Activated B cell treated with CpG ODN at 0.5 μM for 24 hours (primary cell): ENCODE measurements at regions of chr1 and their contacts with region 1.

Region 1: GRCh38 chr1:27603681-27604578 is at the start of gene AHDC1:
- DNase-seq: peak; percentile 89
- ATAC-seq: peak; percentile 78
- H3K4me3 Mint-ChIP-seq: peak within 1 kb of the TSS; percentile 95
- H3K27ac Mint-ChIP-seq: peak within 1 kb of the TSS; percentile 83
- H3K4me1 Mint-ChIP-seq: peaks cover 49% of the 10 kb centered on the region
- H3K27me3 Mint-ChIP-seq: no peaks in the 10 kb centered on the region
- CTCF ChIP-seq: no peak
- total RNA-seq, gene AHDC1: 22.4 and 23.3 TPM in 2 replicates

Region 2: DNA sequence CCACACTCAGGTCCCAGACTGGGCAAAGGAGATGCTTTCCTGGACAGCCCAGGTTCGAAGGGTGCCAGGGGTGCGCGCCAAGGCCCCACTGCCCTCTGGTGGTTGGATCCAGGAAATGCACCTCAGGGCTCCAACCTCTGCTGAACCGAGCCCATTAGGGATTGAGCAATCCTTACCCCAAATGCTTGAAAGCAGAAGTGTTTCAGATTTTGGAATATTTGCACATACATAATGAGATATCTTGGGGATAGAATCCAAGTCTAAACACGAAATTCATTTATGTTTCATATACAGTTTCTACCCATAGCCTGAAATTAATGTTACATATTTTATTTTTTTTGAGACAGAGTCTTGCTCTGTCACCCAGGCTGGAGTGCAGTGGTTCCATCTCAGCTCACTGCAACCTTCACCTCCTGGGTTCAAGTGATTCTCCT is 506.4 kb before region 1 on chr1:
- CTCF ChIA-PET with region 1: no interaction called
- POLR2A ChIA-PET with region 1: interaction called, 15 read pairs
- intact Hi-C with region 1: loop called (anchors 5 kb)
- DNase-seq: peak; percentile 61
- ATAC-seq: peak; percentile 40
- H3K4me3 Mint-ChIP-seq: no peak overlapping the region
- H3K27ac Mint-ChIP-seq: no peak overlapping the region
- H3K4me1 Mint-ChIP-seq: peaks cover 22% of the 10 kb centered on the region
- H3K27me3 Mint-ChIP-seq: no peaks in the 10 kb centered on the region
- CTCF ChIP-seq: peak; percentile 72

Region 3: DNA sequence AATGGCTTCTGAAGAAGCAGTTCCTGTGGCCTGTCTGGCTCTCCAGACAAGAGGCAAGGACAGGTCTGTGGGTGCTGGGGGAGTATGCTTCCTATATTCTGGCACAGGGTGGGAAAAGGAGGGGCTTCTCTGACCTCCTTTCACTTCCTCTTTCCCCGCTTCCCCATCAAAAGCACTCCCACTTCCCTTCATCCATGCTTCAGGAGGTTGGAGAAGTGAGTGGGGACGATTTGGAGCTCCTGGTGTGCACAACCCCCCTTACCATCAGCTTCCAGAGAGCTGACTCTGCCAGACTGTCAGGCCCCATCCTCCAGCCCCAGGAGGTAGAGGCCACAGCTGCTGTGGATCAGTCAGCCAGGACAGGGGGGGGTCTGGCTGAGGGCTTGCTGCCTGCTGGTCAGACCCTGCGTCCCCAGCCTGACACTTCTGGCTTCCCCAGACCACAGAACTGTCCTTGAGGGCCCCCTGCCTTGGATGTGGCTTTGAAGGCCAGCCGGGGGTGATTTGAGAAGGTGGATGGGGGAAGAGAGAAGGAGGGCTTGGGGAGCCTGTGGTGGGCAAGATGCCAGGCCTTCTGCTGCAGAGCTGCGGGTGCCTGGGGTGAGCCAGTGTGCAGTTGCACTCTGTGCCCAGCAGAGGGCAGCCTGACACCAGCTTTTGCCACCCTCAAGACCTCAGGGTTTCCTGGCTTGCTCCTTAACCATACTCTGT is 303.4 kb before region 1 on chr1:
- CTCF ChIA-PET with region 1: interaction called, 85 read pairs
- POLR2A ChIA-PET with region 1: interaction called, 4 read pairs
- intact Hi-C with region 1: loop called (anchors 1 kb)
- DNase-seq: peak; percentile 72
- ATAC-seq: peak; percentile 90
- H3K4me3 Mint-ChIP-seq: no peak overlapping the region
- H3K27ac Mint-ChIP-seq: no peak overlapping the region
- H3K4me1 Mint-ChIP-seq: peaks cover 3% of the 10 kb centered on the region
- H3K27me3 Mint-ChIP-seq: no peaks in the 10 kb centered on the region
- CTCF ChIP-seq: peak; percentile 99

Region 4: DNA sequence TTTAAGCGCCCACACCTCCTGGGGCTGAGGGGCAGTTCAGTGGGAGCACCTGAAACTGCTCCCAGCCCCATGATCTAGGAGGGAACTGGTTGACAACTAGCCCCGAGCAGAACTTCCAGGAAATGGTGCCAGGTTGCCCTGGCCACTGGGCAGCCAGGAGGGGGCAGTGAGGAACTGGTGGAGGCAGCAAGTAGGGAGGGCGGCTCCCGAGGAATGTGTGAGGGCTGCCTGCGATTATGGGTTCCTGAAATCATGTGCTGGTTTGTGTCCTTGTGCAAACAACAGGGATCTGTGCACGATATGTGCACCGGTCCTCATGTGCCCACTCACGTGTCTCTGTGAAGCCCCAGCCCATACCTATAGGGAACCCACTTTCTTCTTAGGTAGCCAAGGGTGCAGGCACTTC is 201.6 kb before region 1 on chr1:
- CTCF ChIA-PET with region 1: interaction called, 47 read pairs
- POLR2A ChIA-PET with region 1: interaction called, 22 read pairs
- intact Hi-C with region 1: loop called (anchors 1 kb)
- DNase-seq: no peak
- ATAC-seq: no peak
- H3K4me3 Mint-ChIP-seq: peak overlapping the region; percentile 72
- H3K27ac Mint-ChIP-seq: peak overlapping the region; percentile 91
- H3K4me1 Mint-ChIP-seq: peaks cover 53% of the 10 kb centered on the region
- H3K27me3 Mint-ChIP-seq: no peaks in the 10 kb centered on the region
- CTCF ChIP-seq: no peak

Region 5: DNA sequence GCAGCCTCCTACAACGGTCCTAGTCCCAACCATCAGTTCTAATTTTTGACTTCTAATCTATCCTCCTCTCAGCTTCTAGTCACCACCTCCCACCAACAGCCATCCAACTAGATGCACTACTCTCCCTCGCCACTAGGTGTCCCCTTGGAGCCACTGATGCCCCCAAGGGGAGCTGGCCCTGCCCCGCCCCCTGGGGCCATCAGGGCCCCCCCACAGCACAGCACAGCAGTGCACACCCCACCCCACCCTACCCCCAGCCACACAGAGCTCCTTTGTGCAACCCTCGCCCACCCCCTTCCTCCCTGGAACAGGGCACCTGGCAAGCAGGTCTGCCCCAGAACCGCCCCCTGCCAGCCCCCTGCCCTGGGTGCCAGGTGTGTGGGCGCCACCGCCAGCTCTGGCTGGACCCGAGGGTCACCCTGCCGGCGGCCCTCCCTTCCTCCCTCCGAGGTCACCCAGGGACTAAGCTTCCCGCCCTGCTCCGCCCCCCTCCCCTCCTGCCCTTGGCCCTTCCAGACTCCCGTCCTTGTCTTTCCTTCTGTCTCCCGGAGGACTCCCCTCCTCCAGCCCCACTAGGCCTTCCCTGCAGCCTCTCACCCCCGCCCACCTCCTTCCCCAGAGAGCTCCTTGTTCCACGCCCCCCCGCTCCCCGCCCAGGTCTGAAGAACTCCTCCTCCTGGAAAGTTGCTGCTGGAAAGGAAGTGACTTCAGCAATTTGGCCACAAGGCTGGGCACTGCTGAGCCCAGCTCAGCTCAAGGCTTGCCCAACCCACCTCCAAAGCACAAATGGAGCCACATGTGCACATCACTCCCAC is 46.9 kb before region 1 on chr1:
- CTCF ChIA-PET with region 1: interaction called, 60 read pairs
- POLR2A ChIA-PET with region 1: interaction called, 14 read pairs
- intact Hi-C with region 1: loop called (anchors 1 kb)
- DNase-seq: peak; percentile 62
- ATAC-seq: peak; percentile 84
- H3K4me3 Mint-ChIP-seq: peak overlapping the region; percentile 36
- H3K27ac Mint-ChIP-seq: peak overlapping the region; percentile 26
- H3K4me1 Mint-ChIP-seq: peaks cover 38% of the 10 kb centered on the region
- H3K27me3 Mint-ChIP-seq: no peaks in the 10 kb centered on the region
- CTCF ChIP-seq: peak; percentile 26

Region 6: DNA sequence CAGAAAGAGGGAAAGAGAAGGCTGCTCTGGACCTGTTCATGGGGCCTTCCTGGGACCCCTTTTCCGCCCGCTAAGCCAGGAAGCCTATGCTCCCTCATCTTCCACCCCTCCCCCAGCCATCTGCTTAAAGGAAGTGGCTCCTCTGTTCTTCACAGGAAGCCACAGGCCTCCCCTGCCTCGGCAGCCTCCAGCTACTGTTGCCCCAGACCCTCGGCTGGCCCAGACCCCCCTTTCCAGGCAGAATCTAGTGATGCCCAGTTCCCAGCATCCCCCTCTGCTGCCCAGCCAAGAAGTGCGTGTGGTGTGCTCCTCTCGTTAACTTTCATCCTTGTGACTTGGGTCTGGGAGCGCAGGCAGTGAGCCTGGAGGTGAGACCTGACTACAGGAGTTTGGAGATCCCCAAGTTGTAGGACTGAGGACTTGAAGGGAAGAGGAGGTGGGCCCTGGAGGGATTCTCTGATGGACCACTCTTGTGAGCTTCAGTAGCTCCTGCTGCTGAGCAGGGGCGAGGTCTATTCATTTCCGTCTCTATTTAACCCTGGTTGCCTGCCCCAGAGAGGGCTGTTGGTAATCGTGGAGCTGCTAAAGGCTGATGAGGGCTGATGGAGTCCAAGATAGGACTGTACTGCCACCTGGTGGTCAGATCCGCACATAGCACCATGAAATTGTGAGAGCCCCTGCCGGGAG is 58.9 kb after region 1 on chr1:
- CTCF ChIA-PET with region 1: interaction called, 253 read pairs
- POLR2A ChIA-PET with region 1: interaction called, 207 read pairs
- intact Hi-C with region 1: loop called (anchors 1 kb)
- DNase-seq: peak; percentile 88
- ATAC-seq: peak; percentile 53
- H3K4me3 Mint-ChIP-seq: peak overlapping the region; percentile 72
- H3K27ac Mint-ChIP-seq: peak overlapping the region; percentile 100
- H3K4me1 Mint-ChIP-seq: peaks cover 51% of the 10 kb centered on the region
- H3K27me3 Mint-ChIP-seq: no peaks in the 10 kb centered on the region
- CTCF ChIP-seq: no peak

Region 7: DNA sequence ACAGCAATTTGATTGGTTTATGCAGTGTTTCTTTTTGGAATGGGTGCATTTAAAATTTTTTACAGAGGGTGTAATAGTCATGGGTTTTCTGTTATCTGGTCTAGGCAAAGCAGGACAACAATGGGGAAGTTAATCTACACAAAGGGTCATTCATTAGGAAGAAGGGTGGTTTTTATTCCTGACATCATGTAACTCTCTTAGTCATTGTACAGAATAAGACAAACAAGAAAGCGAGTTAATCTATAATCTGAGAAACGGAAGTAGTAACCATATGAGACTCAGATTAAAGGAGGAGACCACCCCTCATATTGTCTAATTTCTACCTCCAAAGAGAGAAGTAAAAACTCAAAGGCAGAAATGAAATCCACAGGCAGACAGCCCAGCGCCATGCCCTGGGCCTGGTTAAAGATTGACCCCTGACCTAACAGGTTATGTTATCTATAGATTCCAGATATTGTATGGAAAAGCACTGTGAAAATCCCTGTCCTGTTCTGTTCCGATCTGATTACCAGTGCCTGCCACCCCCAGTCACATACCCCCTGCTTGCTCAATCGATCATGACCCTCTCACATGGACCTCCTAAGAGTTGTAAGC is 78.5 kb after region 1 on chr1:
- CTCF ChIA-PET with region 1: no interaction called
- POLR2A ChIA-PET with region 1: no interaction called
- intact Hi-C with region 1: no loop called
- DNase-seq: no peak
- ATAC-seq: no peak
- H3K4me3 Mint-ChIP-seq: no peak overlapping the region
- H3K27ac Mint-ChIP-seq: no peak overlapping the region
- H3K4me1 Mint-ChIP-seq: no peaks in the 10 kb centered on the region
- H3K27me3 Mint-ChIP-seq: peaks cover 1% of the 10 kb centered on the region
- CTCF ChIP-seq: no peak